Endothelial cell of umbilical vein (primary cell): ENCODE measurements at regions of chr6 and their contacts with region 1.

Region 1: GRCh38 chr6:37630281-37630799 is 67.3 kb downstream of the MDGA1 start:
- DNase-seq: peak; percentile 97
- H3K4me3 ChIP-seq: no peak overlapping the region
- H3K27ac ChIP-seq: peak overlapping the region; percentile 84
- H3K4me1 ChIP-seq: peaks cover 20% of the 10 kb centered on the region
- H3K27me3 ChIP-seq: peaks cover 0 to 5% of the 10 kb centered on the region in 2 experiments
- CTCF ChIP-seq: no peak
- POLR2A ChIP-seq: no peak

Region 2: DNA sequence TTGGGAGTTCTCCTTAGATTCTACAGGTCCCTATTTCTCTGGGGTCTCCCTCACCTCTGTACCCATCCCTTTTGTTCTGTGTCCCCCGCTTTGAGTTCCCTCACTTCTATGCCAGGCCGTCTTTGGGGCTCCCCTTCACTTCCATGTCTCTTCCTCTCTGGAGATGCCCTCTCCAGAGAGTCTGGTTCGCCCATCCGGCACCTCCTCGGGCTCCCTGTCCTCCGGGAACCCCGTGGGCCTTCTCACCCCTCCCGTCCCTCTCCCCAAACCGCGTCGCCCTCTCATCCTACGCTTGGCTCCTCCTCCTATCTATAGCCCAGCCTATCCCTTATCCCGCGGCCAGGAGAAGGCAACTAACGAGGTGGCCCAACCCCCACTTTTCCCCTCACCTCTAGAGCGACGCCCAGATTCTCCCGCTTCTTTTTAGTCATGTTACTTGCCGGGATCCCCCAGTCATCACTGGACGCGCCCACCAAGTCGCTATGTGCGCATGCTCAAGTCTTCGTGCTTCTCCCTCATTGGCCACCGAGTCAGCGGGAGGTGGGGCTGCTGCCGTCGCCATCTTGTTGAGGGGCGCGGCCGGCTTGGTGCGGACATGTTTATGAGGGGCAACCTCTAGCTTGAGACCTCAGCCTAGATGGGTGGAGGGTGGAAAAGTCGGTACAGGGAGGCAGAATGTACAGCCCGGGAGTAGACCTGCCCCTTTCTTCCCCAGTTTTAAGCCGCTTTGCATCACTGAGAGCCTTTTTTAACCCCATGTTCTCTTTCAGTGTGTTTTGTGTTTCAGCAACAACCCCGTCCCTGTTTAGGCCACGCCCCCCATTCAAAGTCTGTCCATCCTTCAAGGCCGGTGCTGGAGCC is 130.7 kb before region 1 on chr6 and contains the start of gene CCDC167:
- CTCF ChIA-PET with region 1: no interaction called
- POLR2A ChIA-PET with region 1: no interaction called
- dilution Hi-C with region 1: no loop called
- intact Hi-C with region 1: no loop called
- DNase-seq: peak; percentile 99
- H3K4me3 ChIP-seq: peak within 1 kb of the TSS; percentile 59 to 83 (median 74)
- H3K27ac ChIP-seq: peak within 1 kb of the TSS; percentile 62
- H3K4me1 ChIP-seq: peaks cover 7% of the 10 kb centered on the region
- H3K27me3 ChIP-seq: peaks cover 6 to 11% of the 10 kb centered on the region in 2 experiments
- CTCF ChIP-seq: no peak
- POLR2A ChIP-seq: no peak
- total RNA-seq, gene CCDC167: 46.6 and 52.7 TPM in 2 replicates

Region 3: DNA sequence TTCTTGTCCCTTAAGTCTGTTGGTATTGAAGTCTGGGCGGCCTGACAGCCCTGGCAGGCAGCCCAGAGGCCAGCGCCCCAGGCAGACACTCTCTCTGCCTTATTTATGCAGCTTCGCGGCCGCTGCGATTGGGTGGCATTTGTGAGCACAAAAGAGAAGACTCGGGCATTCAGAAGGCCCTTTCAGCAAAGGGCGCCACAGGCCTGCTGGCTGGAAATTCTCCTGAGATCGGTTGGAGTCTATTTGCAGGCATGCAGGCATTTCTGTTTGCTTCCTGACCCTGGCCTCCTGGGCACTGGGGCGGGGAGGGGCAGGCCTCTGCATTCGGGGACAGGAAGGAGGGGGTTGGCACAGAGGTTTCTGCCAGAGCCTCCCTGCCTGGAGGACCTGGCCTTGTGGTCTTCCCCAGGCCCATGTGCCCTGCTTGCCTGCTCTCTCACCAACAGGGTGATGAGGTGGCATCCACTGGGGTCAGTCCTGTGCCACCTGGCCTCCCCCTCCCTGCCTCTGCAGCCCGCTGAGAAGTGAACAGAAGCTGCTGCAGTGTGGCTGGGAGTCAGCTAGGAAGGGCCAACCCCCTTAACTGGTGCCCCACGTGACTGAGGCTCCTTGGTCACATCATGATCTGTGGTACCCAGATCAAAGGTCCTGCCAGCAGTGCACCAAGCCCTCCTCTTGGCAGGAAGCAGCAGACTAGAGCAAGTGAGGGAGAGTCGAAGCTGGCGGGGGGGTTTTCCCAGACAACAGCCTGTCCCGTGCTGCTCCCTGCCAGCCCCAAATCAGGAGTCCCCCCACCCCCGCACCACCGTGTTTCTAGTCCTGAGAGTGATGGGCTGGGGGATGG is 114.0 kb before region 1 on chr6:
- CTCF ChIA-PET with region 1: no interaction called
- POLR2A ChIA-PET with region 1: no interaction called
- dilution Hi-C with region 1: no loop called
- intact Hi-C with region 1: no loop called
- DNase-seq: no peak
- H3K4me3 ChIP-seq: no peak overlapping the region
- H3K27ac ChIP-seq: no peak overlapping the region
- H3K4me1 ChIP-seq: no peaks in the 10 kb centered on the region
- H3K27me3 ChIP-seq: peaks cover 22 to 29% of the 10 kb centered on the region in 2 experiments
- CTCF ChIP-seq: no peak
- POLR2A ChIP-seq: no peak

Region 4: GRCh38 chr6:37648465-37649330 is 18.4 kb after region 1 on chr6:
- CTCF ChIA-PET with region 1: interaction called, 12 read pairs
- POLR2A ChIA-PET with region 1: interaction called, 4 read pairs
- dilution Hi-C with region 1: no loop called
- intact Hi-C with region 1: loop called (anchors 1 kb)
- DNase-seq: no peak
- H3K4me3 ChIP-seq: no peak overlapping the region
- H3K27ac ChIP-seq: no peak overlapping the region
- H3K4me1 ChIP-seq: peaks cover 7% of the 10 kb centered on the region
- H3K27me3 ChIP-seq: peaks cover 14 to 28% of the 10 kb centered on the region in 2 experiments
- CTCF ChIP-seq: no peak
- POLR2A ChIP-seq: no peak

Region 5: DNA sequence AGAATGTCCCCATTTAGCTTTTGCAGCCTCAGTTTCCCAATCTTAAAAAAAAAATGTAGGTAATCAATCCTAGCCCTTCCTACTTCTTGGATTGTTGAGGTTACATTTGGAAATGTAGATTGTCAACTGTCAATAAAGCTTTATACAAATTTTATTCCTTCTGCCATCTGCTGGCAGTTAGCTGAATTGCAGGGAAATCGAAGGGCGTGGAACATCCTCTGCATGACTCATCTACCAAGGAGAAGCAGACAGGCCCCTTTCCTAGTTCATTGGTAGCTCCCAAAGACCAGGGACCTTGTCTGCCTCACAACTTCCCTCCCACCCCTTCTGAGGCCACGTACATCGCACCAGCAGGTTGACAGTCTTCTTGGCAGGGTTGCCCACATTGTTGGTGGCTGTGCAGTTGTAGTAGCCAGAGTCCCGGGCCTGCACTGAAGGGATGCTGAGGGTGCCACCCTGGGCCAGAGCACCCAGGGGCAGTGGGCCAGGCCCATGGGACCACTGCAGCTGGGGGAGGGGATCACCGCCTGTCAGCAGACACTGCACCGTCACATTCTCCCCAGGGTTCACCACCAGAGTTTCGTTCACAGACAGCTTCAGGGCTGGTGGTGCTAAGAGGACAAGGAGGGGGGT is 23.7 kb after region 1 on chr6:
- CTCF ChIA-PET with region 1: interaction called, 12 read pairs
- POLR2A ChIA-PET with region 1: no interaction called
- dilution Hi-C with region 1: no loop called
- intact Hi-C with region 1: no loop called
- DNase-seq: peak; percentile 47
- H3K4me3 ChIP-seq: no peak overlapping the region
- H3K27ac ChIP-seq: no peak overlapping the region
- H3K4me1 ChIP-seq: no peaks in the 10 kb centered on the region
- H3K27me3 ChIP-seq: peaks cover 8 to 22% of the 10 kb centered on the region in 2 experiments
- CTCF ChIP-seq: peak; percentile 54 to 77
- POLR2A ChIP-seq: no peak